ENCODE measurements at regions of chr2 and their contacts with region 1.

Region 1: GRCh38 chr2:143162123-143162837 is 33.1 kb downstream of the ARHGAP15 start:
- DNase-seq: peak; percentile 44
- H3K4me3 Mint-ChIP-seq: no peak overlapping the region
- H3K27ac Mint-ChIP-seq: no peak overlapping the region
- H3K4me1 Mint-ChIP-seq: no peaks in the 10 kb centered on the region
- H3K27me3 Mint-ChIP-seq: no peaks in the 10 kb centered on the region
- CTCF ChIP-seq: peak; percentile 58

Region 2: GRCh38 chr2:143205106-143205764 is 43.0 kb after region 1 on chr2:
- CTCF ChIA-PET with region 1: no interaction called
- intact Hi-C with region 1: loop called (anchors 5 kb)
- DNase-seq: no peak
- H3K4me3 Mint-ChIP-seq: no peak overlapping the region
- H3K27ac Mint-ChIP-seq: no peak overlapping the region
- H3K4me1 Mint-ChIP-seq: no peaks in the 10 kb centered on the region
- H3K27me3 Mint-ChIP-seq: no peaks in the 10 kb centered on the region
- CTCF ChIP-seq: peak; percentile 50

Region 3: GRCh38 chr2:143223556-143223955 is 61.3 kb after region 1 on chr2:
- CTCF ChIA-PET with region 1: interaction called, 7 read pairs
- intact Hi-C with region 1: loop called (anchors 2 kb)
- DNase-seq: no peak
- H3K4me3 Mint-ChIP-seq: no peak overlapping the region
- H3K27ac Mint-ChIP-seq: no peak overlapping the region
- H3K4me1 Mint-ChIP-seq: no peaks in the 10 kb centered on the region
- H3K27me3 Mint-ChIP-seq: no peaks in the 10 kb centered on the region
- CTCF ChIP-seq: no peak